ENCODE measurements at regions of chrX and their contacts with region 1.

Region 1: GRCh38 chrX:72208126-72208800 is 26.7 kb downstream of the PIN4 start:
- DNase-seq: no peak
- H3K4me3 ChIP-seq: no peak overlapping the region
- H3K27ac ChIP-seq: no peak overlapping the region
- H3K4me1 ChIP-seq: no peaks in the 10 kb centered on the region
- H3K27me3 ChIP-seq: no peaks in the 10 kb centered on the region
- CTCF ChIP-seq: no peak

Region 2: DNA sequence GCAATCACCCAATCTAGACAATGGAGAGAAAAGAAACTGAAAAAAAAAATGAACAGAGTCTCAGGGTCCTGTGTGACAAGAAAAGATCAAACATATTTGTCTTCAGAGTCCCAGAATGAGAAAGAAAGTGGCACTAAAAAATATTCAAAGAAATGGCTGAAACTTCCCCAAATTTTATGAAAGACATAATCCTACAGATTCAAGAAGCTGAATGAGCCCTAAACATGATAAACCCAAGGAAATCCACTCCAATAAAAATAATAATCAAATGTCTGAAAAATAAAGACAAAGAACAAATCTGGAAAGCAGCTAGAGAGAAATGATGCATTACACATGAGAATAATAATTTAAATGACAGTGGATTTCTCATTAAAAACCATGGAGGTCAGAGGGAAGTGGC is 227.7 kb after region 1 on chrX:
- CTCF ChIA-PET with region 1: interaction called, 13 read pairs
- POLR2A ChIA-PET with region 1: no interaction called
- intact Hi-C with region 1: no loop called
- DNase-seq: no peak
- H3K4me3 ChIP-seq: no peak overlapping the region
- H3K27ac ChIP-seq: no peak overlapping the region
- H3K4me1 ChIP-seq: no peaks in the 10 kb centered on the region
- H3K27me3 ChIP-seq: no peaks in the 10 kb centered on the region
- CTCF ChIP-seq: no peak

Measured in PC-9 (cell line).